ENCODE measurements at regions of chr11 and their contacts with region 1.

Region 1: DNA sequence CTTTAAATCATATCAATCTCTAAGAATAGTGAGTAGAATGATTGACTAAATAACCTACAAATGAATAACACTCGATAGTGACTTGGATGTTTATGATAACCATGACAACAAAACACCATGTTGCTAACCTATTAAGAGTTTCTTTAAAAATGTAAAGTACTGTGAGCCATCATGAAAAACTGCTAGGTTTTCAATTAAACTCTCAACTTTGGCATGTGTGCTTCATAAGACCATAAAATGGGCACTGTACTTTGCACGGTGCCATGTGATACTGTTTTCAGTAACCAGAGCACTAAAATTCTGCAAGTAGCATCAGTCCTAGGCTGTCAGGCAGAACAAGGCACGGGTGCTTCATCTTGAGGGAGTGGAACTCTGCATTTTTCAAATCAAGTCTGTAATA is 96.2 kb upstream of the TRIM77 start:
- DNase-seq: no peak

Region 2: DNA sequence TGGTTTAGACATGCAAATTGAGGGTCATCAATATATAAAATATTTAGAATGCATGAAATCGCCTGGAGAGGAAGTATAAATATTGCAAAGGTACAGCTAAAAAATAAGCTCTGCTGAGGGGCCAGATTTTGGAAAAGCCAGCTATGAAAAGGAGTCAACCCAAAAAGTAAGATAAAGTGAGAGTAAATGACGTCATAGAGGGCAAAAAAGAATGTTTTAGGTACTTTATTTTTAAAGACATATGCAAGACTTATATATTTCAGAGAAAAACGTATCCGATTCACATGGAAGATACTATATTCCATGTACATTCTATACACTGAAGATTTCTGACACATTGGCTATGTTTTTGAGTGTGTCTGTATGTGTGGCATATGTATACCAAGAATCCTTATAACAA is 561.7 kb before region 1 on chr11:
- intact Hi-C with region 1: no loop called
- DNase-seq: no peak

Region 3: DNA sequence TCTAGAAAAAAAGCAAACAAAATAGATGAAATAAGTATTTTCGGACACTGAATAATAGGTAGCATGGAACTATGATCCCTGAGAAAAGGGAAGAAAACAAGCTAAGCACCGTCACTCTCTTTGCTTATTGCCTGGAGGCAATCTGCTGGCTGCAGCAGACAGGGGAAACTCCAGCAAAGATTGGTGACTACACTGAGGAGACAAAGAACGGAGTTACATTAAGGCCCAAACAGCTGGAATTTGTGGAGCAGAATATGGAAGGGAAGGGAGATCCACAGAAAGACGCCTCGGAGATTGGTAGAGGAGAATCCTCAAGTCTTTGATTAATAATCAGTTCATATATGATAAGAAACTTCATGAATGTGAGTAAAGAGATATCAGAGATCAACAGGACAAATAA is 286.0 kb before region 1 on chr11:
- intact Hi-C with region 1: loop called (anchors 10 kb)
- DNase-seq: no peak

Region 4: GRCh38 chr11:89544973-89545372 is 68.9 kb before region 1 on chr11:
- intact Hi-C with region 1: no loop called
- DNase-seq: no peak

Measured in posterior cingulate gyrus (tissue), 11 donors.